Right cardiac atrium (tissue), 5 donors: ENCODE measurements at regions of chr15 and their contacts with region 1.

Region 1: DNA sequence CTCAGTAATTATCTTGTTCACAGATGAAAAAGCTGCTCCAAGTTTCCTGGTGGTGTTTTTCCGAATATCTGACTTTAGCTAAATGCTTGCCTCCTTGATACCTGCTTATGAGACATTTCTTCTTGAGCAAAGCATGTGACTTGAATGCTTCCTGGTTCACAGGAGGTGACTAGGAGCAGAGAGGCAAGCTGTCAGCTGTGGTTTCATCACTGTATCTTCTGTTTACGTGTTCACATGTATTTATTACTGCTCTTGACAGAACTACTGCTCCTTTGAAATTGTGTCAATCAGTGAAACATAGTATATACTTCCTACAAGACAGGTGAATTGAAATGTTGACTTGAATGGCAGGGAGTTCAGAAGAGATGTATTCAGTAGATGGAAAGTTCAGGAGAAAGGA is 8.9 kb upstream of the SPPL2A start:
- DNase-seq: no peak
- ATAC-seq: no peak
- H3K4me3 ChIP-seq: no peak overlapping the region
- H3K27ac ChIP-seq: no peak overlapping the region
- H3K4me1 ChIP-seq: no peaks in the 10 kb centered on the region
- H3K27me3 ChIP-seq: no peaks in the 10 kb centered on the region

Region 2: DNA sequence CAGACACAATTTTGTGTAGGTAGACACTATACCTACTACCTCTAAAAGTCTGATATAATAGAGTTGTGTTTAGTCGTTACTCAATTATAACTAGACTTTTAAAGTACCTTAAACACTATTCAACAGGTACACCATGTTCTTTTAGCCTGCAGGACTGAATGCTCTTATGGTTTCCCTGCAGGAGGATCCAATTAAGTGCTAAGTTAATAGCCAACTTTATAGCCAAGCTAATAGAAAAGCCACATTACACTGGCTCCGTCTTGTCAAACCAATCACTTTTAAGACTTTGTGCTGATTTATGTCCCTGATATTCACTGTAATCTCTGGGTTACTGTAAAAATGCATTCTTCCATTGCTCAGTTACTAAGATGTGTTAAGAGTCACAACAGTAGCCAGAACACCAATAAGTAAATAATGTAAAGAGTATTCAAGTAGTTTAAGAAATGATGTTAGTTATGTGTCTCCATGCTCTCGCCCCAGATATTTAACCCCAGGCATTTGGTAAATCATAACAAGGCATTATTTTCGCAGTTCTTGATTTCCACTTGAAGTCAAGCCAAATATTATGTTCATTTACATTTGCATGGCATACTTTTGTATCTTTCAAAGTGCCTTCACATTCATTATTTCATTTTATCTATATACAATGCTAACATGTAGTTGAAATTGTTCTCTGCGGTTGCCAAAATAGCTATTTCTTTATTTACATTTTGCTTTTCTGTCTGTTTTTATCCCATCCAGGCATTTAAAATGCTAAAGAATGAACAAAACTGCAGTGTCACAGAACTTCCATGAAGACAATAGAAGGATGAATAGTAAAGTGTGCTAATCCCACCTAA is 91.3 kb after region 1 on chr15:
- intact Hi-C with region 1: loop called in 2 of 4 experiments (anchors 10 kb)
- DNase-seq: no peak
- ATAC-seq: no peak
- H3K4me3 ChIP-seq: no peak overlapping the region
- H3K27ac ChIP-seq: no peak overlapping the region
- H3K4me1 ChIP-seq: no peaks in the 10 kb centered on the region
- H3K27me3 ChIP-seq: no peaks in the 10 kb centered on the region